ENCODE measurements at regions of chr3 and their contacts with region 1.

Region 1: GRCh38 chr3:109607897-109608296 is 270.6 kb upstream of the DPPA4 start:
- DNase-seq: no peak
- ATAC-seq: no peak
- H3K4me3 ChIP-seq: no peak overlapping the region
- H3K4me3 Mint-ChIP-seq: no peak overlapping the region
- H3K27ac ChIP-seq: no peak overlapping the region
- H3K27ac Mint-ChIP-seq: no peak overlapping the region
- H3K4me1 ChIP-seq: no peaks in the 10 kb centered on the region
- H3K4me1 Mint-ChIP-seq: peaks cover 0 to 4% (median 0%) of the 10 kb centered on the region in 3 donors
- H3K27me3 ChIP-seq: no peaks in the 10 kb centered on the region
- H3K27me3 Mint-ChIP-seq: peaks cover 2 to 8% of the 10 kb centered on the region in 2 donors

Region 2: GRCh38 chr3:109707642-109708041 is 99.7 kb after region 1 on chr3:
- CTCF ChIA-PET with region 1: interaction called in 1 of 2 experiments, 11 read pairs
- POLR2A ChIA-PET with region 1: no interaction called
- DNase-seq: no peak
- ATAC-seq: no peak
- H3K4me3 ChIP-seq: no peak overlapping the region
- H3K4me3 Mint-ChIP-seq: no peak overlapping the region
- H3K27ac ChIP-seq: no peak overlapping the region
- H3K27ac Mint-ChIP-seq: no peak overlapping the region
- H3K4me1 ChIP-seq: no peaks in the 10 kb centered on the region
- H3K4me1 Mint-ChIP-seq: peaks cover 0 to 2% (median 0%) of the 10 kb centered on the region in 3 donors
- H3K27me3 ChIP-seq: no peaks in the 10 kb centered on the region
- H3K27me3 Mint-ChIP-seq: peaks cover 2 to 6% of the 10 kb centered on the region in 2 donors